GM12878 (cell line): ENCODE measurements at regions of chr20 and their contacts with region 1.

Region 1: DNA sequence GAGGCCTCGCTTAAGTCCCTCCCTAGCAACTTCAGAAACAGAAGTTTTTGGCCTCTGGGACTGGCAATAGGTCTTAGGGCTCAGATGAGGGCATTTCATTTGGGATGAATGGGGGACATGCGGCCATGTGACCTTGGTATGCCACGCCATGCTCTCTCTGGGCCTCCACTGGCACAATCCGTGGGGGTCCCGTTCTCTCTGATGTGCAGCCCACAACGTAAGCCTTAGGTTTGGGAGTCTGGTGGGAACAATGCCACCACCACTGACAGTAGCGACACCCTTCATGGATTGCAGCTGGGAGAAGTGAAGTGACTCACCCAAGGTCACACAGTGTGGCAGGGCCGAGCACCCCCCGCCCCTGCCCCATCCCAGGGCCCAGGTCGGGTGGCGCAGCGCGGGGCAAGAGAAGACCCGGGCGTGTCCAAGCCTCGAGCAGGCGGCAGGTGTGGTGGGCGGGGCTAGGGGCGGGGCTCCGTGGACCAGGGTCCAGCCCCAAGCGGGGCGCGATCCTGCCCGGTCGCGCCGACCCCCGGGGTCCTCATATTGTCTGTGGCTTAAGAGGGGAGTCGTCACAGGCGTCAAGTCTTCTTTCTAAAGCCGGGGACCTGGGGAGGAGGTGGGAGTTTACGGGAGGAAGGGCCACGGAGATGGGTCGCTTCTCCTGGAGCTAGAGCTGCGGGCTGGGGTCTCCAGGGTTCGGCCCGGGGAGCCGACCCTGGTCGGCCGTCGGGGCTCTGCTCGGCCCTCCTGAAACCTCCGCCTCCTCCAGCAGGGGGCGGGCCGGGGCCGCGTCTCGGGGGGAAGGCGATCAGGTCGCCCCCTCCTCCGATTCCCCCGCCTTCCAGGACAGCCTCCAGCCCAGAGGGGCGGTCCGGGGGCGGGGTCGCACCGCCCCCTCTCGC is 698 bp upstream of the CEBPB start:
- DNase-seq: no peak
- ATAC-seq: peak; percentile 67
- H3K4me3 ChIP-seq: peak overlapping the region; percentile 88
- H3K27ac ChIP-seq: no peak overlapping the region
- H3K4me1 ChIP-seq: peaks cover 7% of the 10 kb centered on the region
- H3K27me3 ChIP-seq: no peaks in the 10 kb centered on the region
- CTCF ChIP-seq: peak; percentile 41 to 76 (median 70)
- EP300 ChIP-seq: no peak
- POLR2A ChIP-seq: no peak
- RAD21 ChIP-seq: peak; percentile 81

Region 2: DNA sequence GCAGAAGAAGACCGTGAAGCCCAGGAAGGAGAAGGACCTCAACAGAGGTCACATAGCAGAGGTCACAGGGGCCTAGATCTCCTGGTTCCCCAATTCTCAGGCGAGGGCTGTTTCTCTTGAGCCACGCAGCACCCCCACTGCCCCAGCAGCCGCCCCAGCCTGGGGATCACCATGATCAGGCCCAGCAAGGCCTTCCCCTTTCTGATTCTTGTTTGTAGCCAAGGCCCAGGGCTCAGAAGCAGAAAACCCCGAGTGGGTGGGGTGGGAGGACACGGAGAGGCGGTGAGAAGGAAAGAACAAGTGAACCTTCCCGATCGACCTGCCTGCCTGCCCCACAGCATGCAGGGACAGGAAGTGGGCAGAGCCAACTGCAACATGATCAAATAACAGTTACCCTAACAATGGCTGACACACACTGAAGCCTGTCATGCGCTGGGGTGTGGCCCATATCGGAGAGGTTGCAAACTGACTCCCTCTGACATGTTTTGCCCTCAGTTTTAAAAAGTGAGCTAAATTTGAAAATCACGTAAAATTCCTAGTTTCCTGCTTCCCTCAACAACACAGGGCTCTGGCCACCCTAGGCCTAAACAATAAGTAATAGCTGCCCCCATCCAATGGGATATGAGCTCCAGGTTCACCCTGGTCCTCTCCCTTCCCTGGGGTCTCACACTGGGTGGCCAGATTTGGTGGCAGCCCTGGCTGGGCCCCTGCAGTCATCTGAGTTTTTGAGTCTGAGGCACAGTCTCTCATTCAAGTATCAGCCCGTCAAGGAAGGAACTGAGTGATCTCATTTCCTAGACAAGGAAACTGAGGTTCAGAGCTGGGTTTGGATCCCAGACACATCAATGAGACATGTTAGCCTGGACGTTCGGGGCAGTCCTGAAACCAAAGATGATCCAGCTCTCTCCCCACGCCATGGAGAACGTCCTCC is 42.9 kb before region 1 on chr20:
- CTCF ChIA-PET with region 1: no interaction called
- POLR2A ChIA-PET with region 1: no interaction called
- RAD21 ChIA-PET with region 1: no interaction called
- SMC1A ChIA-PET with region 1: no interaction called
- in situ Hi-C with region 1: no loop called
- intact Hi-C with region 1: no loop called
- DNase-seq: peak; percentile 45
- ATAC-seq: peak; percentile 96
- H3K4me3 ChIP-seq: peak overlapping the region; percentile 62; the same call in 1 of the 2 replicates
- H3K27ac ChIP-seq: peak overlapping the region; percentile 93
- H3K4me1 ChIP-seq: peaks cover 15% of the 10 kb centered on the region
- H3K27me3 ChIP-seq: no peaks in the 10 kb centered on the region
- CTCF ChIP-seq: no peak
- EP300 ChIP-seq: peak; percentile 8 to 23; a peak in 1 of 4 replicates
- POLR2A ChIP-seq: peak; percentile 80
- RAD21 ChIP-seq: no peak

Region 3: DNA sequence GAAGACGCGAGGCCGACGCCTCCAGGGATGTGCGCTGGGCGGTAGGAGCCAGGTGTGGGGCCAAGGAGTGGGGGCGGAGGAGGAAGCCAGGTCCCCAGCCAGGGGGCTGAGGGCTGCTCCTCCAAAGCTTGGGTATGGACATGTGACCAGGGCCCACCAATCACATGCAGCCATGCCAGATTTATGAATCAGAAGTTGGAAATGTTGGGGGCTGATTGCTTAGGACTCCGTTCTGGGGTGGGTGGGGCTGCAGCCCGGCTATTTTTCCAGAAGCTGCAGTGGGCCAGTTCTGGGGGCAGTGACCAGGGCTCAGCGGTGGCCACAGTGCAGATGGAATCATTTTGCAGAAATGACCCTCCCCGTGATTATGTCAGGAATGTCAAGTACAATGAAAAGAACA is 96.7 kb after region 1 on chr20:
- CTCF ChIA-PET with region 1: no interaction called
- POLR2A ChIA-PET with region 1: no interaction called
- RAD21 ChIA-PET with region 1: no interaction called
- SMC1A ChIA-PET with region 1: no interaction called
- in situ Hi-C with region 1: no loop called
- intact Hi-C with region 1: loop called (anchors 2 kb)
- DNase-seq: no peak
- ATAC-seq: peak; percentile 63
- H3K4me3 ChIP-seq: peak overlapping the region; percentile 39
- H3K27ac ChIP-seq: peak overlapping the region; percentile 59
- H3K4me1 ChIP-seq: peaks cover 24% of the 10 kb centered on the region
- H3K27me3 ChIP-seq: no peaks in the 10 kb centered on the region
- CTCF ChIP-seq: no peak
- EP300 ChIP-seq: no peak
- POLR2A ChIP-seq: no peak
- RAD21 ChIP-seq: no peak

Region 4: DNA sequence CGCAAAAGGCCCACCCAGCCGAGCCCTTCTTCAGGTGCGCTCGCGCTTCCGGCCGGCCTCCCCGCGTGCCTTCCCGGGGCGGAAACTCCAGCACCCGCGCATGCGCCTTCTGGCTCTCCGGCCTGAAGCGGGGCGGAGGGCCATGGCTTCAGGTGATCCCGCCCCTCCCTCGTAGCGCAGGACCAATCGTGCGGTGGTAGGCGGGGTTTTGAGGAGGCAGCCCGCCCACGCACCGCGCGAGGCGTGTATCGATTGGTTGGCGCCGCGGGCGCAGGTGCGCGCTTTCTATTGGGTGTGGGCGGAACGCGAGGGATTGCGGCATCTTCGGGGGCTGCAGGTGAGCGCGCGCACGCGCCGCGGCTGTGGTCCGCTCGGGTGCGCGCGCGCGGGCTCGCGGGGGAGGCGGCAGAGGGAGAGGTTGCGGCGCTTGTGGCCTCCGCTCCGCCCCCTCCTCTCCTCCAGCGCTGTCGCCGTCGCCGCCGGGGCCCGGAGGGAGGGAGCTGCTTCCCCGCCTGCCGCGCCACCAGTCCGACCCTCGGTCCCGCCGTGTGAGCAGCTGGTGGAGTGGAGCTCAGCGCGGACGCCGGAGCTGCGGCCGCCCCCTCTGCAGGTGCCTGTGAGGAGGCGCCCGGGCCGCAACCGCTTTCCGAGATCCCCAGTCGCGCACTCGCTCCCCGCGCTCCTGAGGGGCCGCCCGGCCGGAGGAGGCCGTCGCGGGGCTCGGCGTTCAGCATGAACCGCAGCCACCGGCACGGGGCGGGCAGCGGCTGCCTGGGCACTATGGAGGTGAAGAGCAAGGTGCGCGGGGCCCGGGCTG is 541.3 kb after region 1 on chr20 and contains the start of gene PARD6B:
- CTCF ChIA-PET with region 1: no interaction called
- POLR2A ChIA-PET with region 1: no interaction called
- RAD21 ChIA-PET with region 1: no interaction called
- SMC1A ChIA-PET with region 1: no interaction called
- in situ Hi-C with region 1: no loop called
- intact Hi-C with region 1: loop called (anchors 10 kb)
- DNase-seq: peak; percentile 97
- ATAC-seq: peak; percentile 94
- H3K4me3 ChIP-seq: peak within 1 kb of the TSS; percentile 83
- H3K27ac ChIP-seq: peak within 1 kb of the TSS; percentile 39
- H3K4me1 ChIP-seq: peaks cover 12% of the 10 kb centered on the region; the same call in 1 of the 2 replicates
- H3K27me3 ChIP-seq: no peaks in the 10 kb centered on the region
- CTCF ChIP-seq: no peak
- EP300 ChIP-seq: no peak
- POLR2A ChIP-seq: peak; percentile 79
- RAD21 ChIP-seq: no peak
- polyA plus RNA-seq, gene PARD6B: 0.57 to 1.9 TPM